ENCODE measurements at regions of chr9 and their contacts with region 1.

Region 1: GRCh38 chr9:121439711-121440664 is 59.7 kb downstream of the GGTA1 start:
- DNase-seq: peak; percentile 17
- H3K4me3 Mint-ChIP-seq: no peak overlapping the region
- H3K27ac Mint-ChIP-seq: no peak overlapping the region
- H3K4me1 Mint-ChIP-seq: no peaks in the 10 kb centered on the region
- H3K27me3 Mint-ChIP-seq: peaks cover 26% of the 10 kb centered on the region
- CTCF ChIP-seq: peak; percentile 15

Region 2: DNA sequence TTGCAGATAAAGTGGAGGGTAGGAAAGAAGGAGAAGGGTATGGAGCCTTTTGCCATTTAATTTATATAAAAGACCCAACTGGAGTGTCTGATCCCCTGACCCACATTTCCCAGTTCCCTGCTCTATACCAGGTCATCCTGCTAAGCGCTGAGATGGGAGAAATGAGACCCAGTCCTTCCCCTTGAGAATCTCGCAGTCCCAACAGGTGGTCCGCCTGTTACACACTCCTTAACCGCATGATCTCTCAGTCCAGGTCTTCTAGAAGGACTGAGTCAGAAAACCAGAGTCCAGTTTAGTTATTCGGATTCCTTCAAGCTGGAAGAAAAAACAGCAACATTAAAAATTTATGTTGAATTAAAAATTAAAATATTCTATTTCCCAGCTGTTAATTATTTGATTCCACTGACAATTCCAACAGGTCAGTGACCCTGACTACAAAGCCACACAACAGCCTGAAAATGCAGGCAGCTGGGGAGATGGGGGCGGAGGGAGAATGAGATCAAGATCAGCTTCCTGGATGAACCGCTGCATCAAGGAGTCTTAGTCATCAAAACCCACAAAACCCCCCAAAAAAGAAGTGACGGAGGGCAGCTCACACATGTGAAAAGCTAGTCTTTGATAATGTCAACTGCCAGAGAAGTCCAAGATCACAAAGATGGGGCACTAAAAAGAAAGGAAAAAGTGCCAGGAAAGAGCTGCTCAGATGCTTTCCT is 15.7 kb after region 1 on chr9:
- CTCF ChIA-PET with region 1: interaction called, 34 read pairs
- POLR2A ChIA-PET with region 1: no interaction called
- intact Hi-C with region 1: no loop called
- DNase-seq: no peak
- H3K4me3 Mint-ChIP-seq: no peak overlapping the region
- H3K27ac Mint-ChIP-seq: no peak overlapping the region
- H3K4me1 Mint-ChIP-seq: no peaks in the 10 kb centered on the region
- H3K27me3 Mint-ChIP-seq: peaks cover 49% of the 10 kb centered on the region
- CTCF ChIP-seq: no peak

Region 3: GRCh38 chr9:121538246-121538645 is 98.3 kb after region 1 on chr9:
- CTCF ChIA-PET with region 1: no interaction called
- POLR2A ChIA-PET with region 1: no interaction called
- intact Hi-C with region 1: loop called (anchors 10 kb)
- DNase-seq: peak; percentile 41
- H3K4me3 Mint-ChIP-seq: no peak overlapping the region
- H3K27ac Mint-ChIP-seq: no peak overlapping the region
- H3K4me1 Mint-ChIP-seq: no peaks in the 10 kb centered on the region
- H3K27me3 Mint-ChIP-seq: peaks cover 5% of the 10 kb centered on the region
- CTCF ChIP-seq: peak; percentile 11

Measured in MCF 10A (cell line).